Calu3 (cell line): ENCODE measurements at regions of chr11 and their contacts with region 1.

Region 1: DNA sequence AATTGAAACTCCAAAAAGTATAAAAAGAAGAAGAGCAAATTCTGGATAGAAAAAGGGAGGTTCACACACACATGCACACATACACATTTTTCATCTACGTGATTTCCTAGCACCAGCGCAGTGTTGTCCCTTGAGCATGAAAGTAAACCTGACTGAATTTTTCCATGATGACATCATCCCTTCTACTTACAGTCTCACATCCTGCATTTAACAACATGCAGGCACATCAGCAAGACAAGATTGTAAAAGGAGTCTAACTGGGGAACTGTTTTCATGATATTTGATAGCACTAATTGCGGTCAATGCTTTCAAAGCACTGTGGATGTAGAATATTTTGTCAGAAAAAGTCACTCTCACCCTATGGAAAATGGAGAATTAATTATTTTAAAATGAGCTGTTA is 36.6 kb downstream of the GAS2 start:
- DNase-seq: peak; percentile 29
- H3K4me3 Mint-ChIP-seq: peak overlapping the region; percentile 51
- H3K27ac Mint-ChIP-seq: peak overlapping the region; percentile 94
- H3K4me1 Mint-ChIP-seq: peaks cover 34% of the 10 kb centered on the region
- H3K27me3 Mint-ChIP-seq: no peaks in the 10 kb centered on the region
- CTCF ChIP-seq: no peak

Region 2: GRCh38 chr11:22674470-22675439 is 28.3 kb before region 1 on chr11:
- CTCF ChIA-PET with region 1: no interaction called
- intact Hi-C with region 1: loop called (anchors 1 kb)
- DNase-seq: peak; percentile 54
- H3K4me3 Mint-ChIP-seq: peak overlapping the region; percentile 17
- H3K27ac Mint-ChIP-seq: peak overlapping the region; percentile 70
- H3K4me1 Mint-ChIP-seq: peaks cover 40% of the 10 kb centered on the region
- H3K27me3 Mint-ChIP-seq: no peaks in the 10 kb centered on the region
- CTCF ChIP-seq: no peak

Region 3: DNA sequence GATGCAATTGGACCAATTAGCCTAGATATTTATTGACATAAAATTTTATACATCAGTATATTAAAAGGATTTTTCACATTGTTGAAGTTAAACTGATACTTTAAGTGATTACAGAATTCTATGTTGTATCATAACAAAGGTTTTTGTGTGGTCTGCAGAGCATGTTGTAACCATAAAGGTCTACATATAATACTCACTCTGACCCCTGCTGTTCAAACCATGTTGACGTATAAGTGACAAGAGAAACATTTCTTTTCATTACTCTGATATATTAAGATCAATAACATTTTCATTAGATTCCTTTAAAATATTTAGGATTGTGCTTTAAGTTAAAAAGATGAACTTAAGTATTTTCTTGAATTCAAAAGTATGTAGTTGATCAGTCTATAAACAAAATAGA is 27.3 kb after region 1 on chr11:
- CTCF ChIA-PET with region 1: no interaction called
- intact Hi-C with region 1: no loop called
- DNase-seq: peak; percentile 14
- H3K4me3 Mint-ChIP-seq: no peak overlapping the region
- H3K27ac Mint-ChIP-seq: no peak overlapping the region
- H3K4me1 Mint-ChIP-seq: no peaks in the 10 kb centered on the region
- H3K27me3 Mint-ChIP-seq: no peaks in the 10 kb centered on the region
- CTCF ChIP-seq: no peak